ENCODE measurements at regions of chr12 and their contacts with region 1.

Region 1: GRCh38 chr12:39990122-39991101 is 115.5 kb downstream of the SLC2A13 start:
- DNase-seq: peak; percentile 69
- H3K4me3 Mint-ChIP-seq: no peak overlapping the region
- H3K27ac Mint-ChIP-seq: no peak overlapping the region
- H3K4me1 Mint-ChIP-seq: no peaks in the 10 kb centered on the region
- H3K27me3 Mint-ChIP-seq: no peaks in the 10 kb centered on the region

Region 2: DNA sequence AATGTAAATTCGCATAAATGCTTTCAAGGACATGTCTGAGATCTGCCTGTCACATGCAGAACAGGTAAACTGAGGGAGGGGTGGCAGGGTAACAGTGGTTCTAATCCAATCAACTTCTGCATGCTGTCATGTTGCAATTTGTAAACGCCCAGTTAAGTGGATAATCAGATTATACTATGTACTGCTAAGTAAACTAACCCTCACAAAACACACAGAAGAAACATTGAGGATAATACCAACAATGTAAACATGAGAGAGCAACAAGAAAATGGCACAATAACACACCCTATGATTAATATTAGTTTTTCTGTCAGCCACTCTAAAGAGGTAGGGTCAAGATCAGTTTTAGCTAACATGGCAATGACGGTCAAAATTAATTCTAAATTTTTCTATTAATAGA is 671.2 kb before region 1 on chr12:
- CTCF ChIA-PET with region 1: interaction called, 4 read pairs
- POLR2A ChIA-PET with region 1: no interaction called
- intact Hi-C with region 1: loop called (anchors 1 kb)
- DNase-seq: no peak
- H3K4me3 Mint-ChIP-seq: no peak overlapping the region
- H3K27ac Mint-ChIP-seq: no peak overlapping the region
- H3K4me1 Mint-ChIP-seq: no peaks in the 10 kb centered on the region
- H3K27me3 Mint-ChIP-seq: no peaks in the 10 kb centered on the region

Region 3: GRCh38 chr12:39587225-39587624 is 403.2 kb before region 1 on chr12:
- CTCF ChIA-PET with region 1: interaction called, 9 read pairs
- POLR2A ChIA-PET with region 1: no interaction called
- intact Hi-C with region 1: loop called (anchors 5 kb)
- DNase-seq: no peak
- H3K4me3 Mint-ChIP-seq: no peak overlapping the region
- H3K27ac Mint-ChIP-seq: no peak overlapping the region
- H3K4me1 Mint-ChIP-seq: peaks cover 9% of the 10 kb centered on the region
- H3K27me3 Mint-ChIP-seq: no peaks in the 10 kb centered on the region

Region 4: GRCh38 chr12:39712334-39712733 is 278.1 kb before region 1 on chr12:
- CTCF ChIA-PET with region 1: no interaction called
- POLR2A ChIA-PET with region 1: no interaction called
- intact Hi-C with region 1: no loop called
- DNase-seq: no peak
- H3K4me3 Mint-ChIP-seq: no peak overlapping the region
- H3K27ac Mint-ChIP-seq: no peak overlapping the region
- H3K4me1 Mint-ChIP-seq: no peaks in the 10 kb centered on the region
- H3K27me3 Mint-ChIP-seq: no peaks in the 10 kb centered on the region

Region 5: DNA sequence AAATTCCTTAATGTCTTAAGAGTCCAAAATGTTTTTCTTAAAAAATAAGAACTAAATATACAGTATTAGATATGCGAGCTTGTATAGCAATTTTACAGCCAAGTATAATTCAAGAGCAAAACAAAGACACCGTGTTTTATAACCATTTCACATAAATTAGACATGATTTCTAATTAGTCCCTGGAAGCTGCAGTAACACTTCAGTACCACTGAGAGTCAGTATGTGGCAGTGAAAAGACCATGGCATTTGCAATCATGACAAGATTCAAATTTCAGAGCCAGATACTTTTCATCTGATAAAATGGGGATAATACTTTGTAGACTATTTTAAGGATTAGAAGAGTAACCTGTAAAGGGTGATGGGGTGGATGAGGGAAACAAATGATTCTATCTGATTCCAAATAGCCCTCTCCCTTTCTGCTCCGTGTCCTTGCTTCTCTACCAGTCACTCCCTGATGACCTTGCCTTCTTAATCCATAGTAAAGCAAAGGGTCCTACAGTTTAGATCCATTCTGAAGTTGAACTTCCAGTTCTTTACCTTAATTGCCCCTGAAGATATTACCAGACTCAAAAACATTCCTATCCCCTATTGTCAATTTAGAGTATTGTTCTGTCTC is 225.4 kb before region 1 on chr12:
- CTCF ChIA-PET with region 1: interaction called, 13 read pairs
- POLR2A ChIA-PET with region 1: no interaction called
- intact Hi-C with region 1: loop called (anchors 1 kb)
- DNase-seq: no peak
- H3K4me3 Mint-ChIP-seq: no peak overlapping the region
- H3K27ac Mint-ChIP-seq: no peak overlapping the region
- H3K4me1 Mint-ChIP-seq: no peaks in the 10 kb centered on the region
- H3K27me3 Mint-ChIP-seq: no peaks in the 10 kb centered on the region

Region 6: GRCh38 chr12:40010899-40011774 is 20.7 kb after region 1 on chr12:
- CTCF ChIA-PET with region 1: interaction called, 16 read pairs
- POLR2A ChIA-PET with region 1: no interaction called
- intact Hi-C with region 1: no loop called
- DNase-seq: peak; percentile 40
- H3K4me3 Mint-ChIP-seq: no peak overlapping the region
- H3K27ac Mint-ChIP-seq: no peak overlapping the region
- H3K4me1 Mint-ChIP-seq: peaks cover 20% of the 10 kb centered on the region
- H3K27me3 Mint-ChIP-seq: no peaks in the 10 kb centered on the region

Region 7: DNA sequence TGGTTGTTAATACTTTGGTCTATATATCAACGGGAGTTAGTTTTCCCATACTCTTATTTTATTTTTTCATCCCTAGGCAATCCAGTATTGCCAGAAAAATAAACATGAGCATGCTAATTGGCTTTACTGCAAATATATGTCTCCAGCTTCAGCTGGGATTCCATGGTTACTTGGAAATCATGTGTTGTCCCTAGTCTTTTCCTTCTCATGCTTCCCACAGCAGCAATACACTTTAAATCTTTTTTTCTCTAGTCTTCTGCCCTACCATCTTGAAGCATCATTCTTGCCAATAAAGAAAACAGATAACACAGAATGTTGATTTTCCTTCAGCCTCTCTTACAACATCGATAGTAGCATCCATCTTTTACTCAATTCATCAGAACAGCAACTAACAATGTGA is 55.2 kb after region 1 on chr12:
- CTCF ChIA-PET with region 1: no interaction called
- POLR2A ChIA-PET with region 1: no interaction called
- intact Hi-C with region 1: no loop called
- DNase-seq: no peak
- H3K4me3 Mint-ChIP-seq: no peak overlapping the region
- H3K27ac Mint-ChIP-seq: no peak overlapping the region
- H3K4me1 Mint-ChIP-seq: peaks cover 2% of the 10 kb centered on the region
- H3K27me3 Mint-ChIP-seq: no peaks in the 10 kb centered on the region

Measured in activated CD4-positive, alpha-beta memory T cell treated with anti-CD3 and anti-CD28 coated beads for 36 hours (primary cell).